Head of caudate nucleus (tissue), 42 donors: ENCODE measurements at regions of chr14 and their contacts with region 1.

Region 1: DNA sequence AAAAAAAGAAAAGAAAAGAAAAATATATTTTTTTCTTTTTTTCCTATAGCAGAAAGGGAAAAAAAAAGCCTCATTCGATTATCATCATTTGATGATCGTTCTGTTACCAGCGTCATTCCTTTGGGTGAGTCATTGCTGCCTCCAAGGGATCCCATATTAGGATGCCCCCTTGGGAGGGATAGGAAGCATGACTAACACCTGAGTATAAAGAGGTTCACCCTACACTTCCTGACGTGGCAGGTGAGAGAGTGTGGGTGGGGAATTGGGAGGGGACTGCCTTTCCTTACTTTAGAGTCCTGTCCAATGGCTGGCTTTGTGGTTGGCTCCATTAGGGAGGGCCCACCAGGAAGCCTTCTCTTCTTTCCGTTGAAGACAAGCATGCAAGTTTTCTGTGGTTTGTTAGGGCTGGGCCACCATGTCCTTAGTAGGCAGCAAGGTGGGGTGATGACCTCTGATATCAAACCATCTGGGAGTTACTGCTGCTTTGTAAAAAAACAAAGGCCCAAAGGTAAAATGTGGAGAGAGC is 56.1 kb upstream of the FUT8 start:
- DNase-seq: peak in 26 of 42 donors; percentile 7 to 79 (median 34)

Region 2: GRCh38 chr14:65164068-65164824 is 192.1 kb before region 1 on chr14:
- intact Hi-C with region 1: no loop called
- DNase-seq: peak in 19 of 42 donors; percentile 19 to 81 (median 49)

Region 3: GRCh38 chr14:65287264-65288131 is 68.9 kb before region 1 on chr14:
- intact Hi-C with region 1: loop called (anchors 5 kb)
- DNase-seq: no peak

Region 4: GRCh38 chr14:65501328-65501727 is 144.9 kb after region 1 on chr14:
- intact Hi-C with region 1: no loop called
- DNase-seq: no peak